ENCODE measurements at regions of chr10 and their contacts with region 1.

Region 1: GRCh38 chr10:63720072-63720537 is 198.9 kb downstream of the REEP3 start:
- DNase-seq: no peak
- ATAC-seq: peak; percentile 54
- H3K4me3 ChIP-seq: no peak overlapping the region
- H3K27ac ChIP-seq: no peak overlapping the region
- H3K4me1 ChIP-seq: peaks cover 0 to 1% of the 10 kb centered on the region in 2 donors
- H3K27me3 ChIP-seq: no peaks in the 10 kb centered on the region

Region 2: GRCh38 chr10:62816331-62817120 is 903.6 kb before region 1 on chr10 and contains the start of gene EGR2:
- intact Hi-C with region 1: loop called in 1 of 2 experiments (anchors 10 kb)
- DNase-seq: peak; percentile 96 to 97
- ATAC-seq: peak; percentile 92
- H3K4me3 ChIP-seq: peak within 1 kb of the TSS; percentile 51 to 74
- H3K27ac ChIP-seq: peak within 1 kb of the TSS; percentile 50 to 66
- H3K4me1 ChIP-seq: no peaks in the 10 kb centered on the region
- H3K27me3 ChIP-seq: no peaks in the 10 kb centered on the region
- total RNA-seq, gene EGR2: 11.4 to 23.0 TPM

Region 3: GRCh38 chr10:63166742-63167258 is 553.3 kb before region 1 on chr10:
- intact Hi-C with region 1: loop called (anchors 2 kb)
- DNase-seq: no peak
- ATAC-seq: peak; percentile 79
- H3K4me3 ChIP-seq: no peak overlapping the region
- H3K27ac ChIP-seq: no peak overlapping the region
- H3K4me1 ChIP-seq: no peaks in the 10 kb centered on the region
- H3K27me3 ChIP-seq: no peaks in the 10 kb centered on the region

Region 4: GRCh38 chr10:63206997-63207811 is 512.9 kb before region 1 on chr10:
- intact Hi-C with region 1: loop called in 1 of 2 experiments (anchors 5 kb)
- DNase-seq: peak in 1 of 2 donors; percentile 55
- ATAC-seq: peak; percentile 74
- H3K4me3 ChIP-seq: peak overlapping the region; percentile 11 to 32
- H3K27ac ChIP-seq: peak overlapping the region; percentile 64 to 82
- H3K4me1 ChIP-seq: peaks cover 3 to 14% of the 10 kb centered on the region in 2 donors
- H3K27me3 ChIP-seq: no peaks in the 10 kb centered on the region

Region 5: DNA sequence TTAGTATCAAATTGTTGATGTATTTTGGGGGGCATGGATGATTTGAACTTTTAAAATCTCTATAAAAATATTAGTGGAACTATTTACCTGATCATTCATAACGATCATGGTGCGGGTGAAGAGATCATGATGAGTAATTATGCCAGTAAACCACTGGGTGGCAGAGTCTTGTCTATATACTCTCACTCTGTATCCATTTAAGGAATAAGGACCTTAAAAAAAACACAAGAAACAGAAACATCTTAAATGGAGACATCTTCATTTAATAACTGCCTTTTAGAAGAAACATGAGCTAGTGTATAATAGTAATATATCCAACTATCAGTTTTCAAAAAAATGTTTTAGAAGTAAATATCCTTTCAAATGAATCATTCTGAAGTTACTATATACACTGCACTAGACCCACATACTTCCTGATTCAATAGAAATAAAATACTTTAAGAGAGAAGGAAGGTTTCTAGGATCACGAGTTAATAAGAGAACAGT is 502.9 kb before region 1 on chr10:
- intact Hi-C with region 1: loop called (anchors 5 kb)
- DNase-seq: no peak
- ATAC-seq: peak; percentile 88
- H3K4me3 ChIP-seq: no peak overlapping the region
- H3K27ac ChIP-seq: no peak overlapping the region
- H3K4me1 ChIP-seq: no peaks in the 10 kb centered on the region
- H3K27me3 ChIP-seq: no peaks in the 10 kb centered on the region

Region 6: GRCh38 chr10:63671317-63671937 is 48.7 kb before region 1 on chr10:
- intact Hi-C with region 1: no loop called
- DNase-seq: no peak
- ATAC-seq: peak; percentile 21
- H3K4me3 ChIP-seq: no peak overlapping the region
- H3K27ac ChIP-seq: no peak overlapping the region
- H3K4me1 ChIP-seq: peaks cover 0 to 5% of the 10 kb centered on the region in 2 donors
- H3K27me3 ChIP-seq: no peaks in the 10 kb centered on the region

Region 7: GRCh38 chr10:63806330-63806729 is 86.2 kb after region 1 on chr10:
- intact Hi-C with region 1: no loop called
- DNase-seq: no peak
- ATAC-seq: no peak
- H3K4me3 ChIP-seq: no peak overlapping the region
- H3K27ac ChIP-seq: no peak overlapping the region
- H3K4me1 ChIP-seq: no peaks in the 10 kb centered on the region
- H3K27me3 ChIP-seq: no peaks in the 10 kb centered on the region

Region 8: DNA sequence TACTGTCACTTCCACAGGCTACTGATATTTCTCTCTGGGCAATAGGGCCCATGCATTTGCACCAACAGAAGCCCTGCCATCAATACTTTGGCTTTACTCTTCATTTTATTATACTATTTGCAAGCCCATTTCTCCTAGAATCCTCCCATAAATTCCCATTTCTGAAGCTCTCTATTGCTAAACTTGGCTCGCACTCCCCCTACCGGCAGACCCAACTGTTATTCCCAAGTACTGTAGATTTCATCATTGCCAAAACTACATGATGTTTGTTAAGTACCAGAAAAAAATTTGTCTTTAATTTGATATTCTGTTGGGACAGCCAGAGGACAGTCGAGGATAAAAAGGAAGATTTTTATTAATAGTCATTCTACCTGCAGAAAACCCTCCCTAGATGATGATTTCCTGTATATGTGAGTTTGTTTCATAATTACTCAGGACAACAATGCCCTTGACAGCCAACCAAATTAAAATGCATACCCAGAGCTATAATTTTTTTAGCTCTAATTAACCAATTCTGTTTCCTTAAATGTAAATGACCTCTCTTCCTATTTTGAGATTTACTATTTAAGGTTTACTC is 99.7 kb after region 1 on chr10:
- intact Hi-C with region 1: loop called in 1 of 2 experiments (anchors 5 kb)
- DNase-seq: peak; percentile 84 to 90
- ATAC-seq: peak; percentile 66
- H3K4me3 ChIP-seq: no peak overlapping the region
- H3K27ac ChIP-seq: no peak overlapping the region
- H3K4me1 ChIP-seq: no peaks in the 10 kb centered on the region
- H3K27me3 ChIP-seq: no peaks in the 10 kb centered on the region

Measured in aorta (tissue), 5 donors.